B cell (primary cell): ENCODE measurements at regions of chr1 and their contacts with region 1.

Region 1: DNA sequence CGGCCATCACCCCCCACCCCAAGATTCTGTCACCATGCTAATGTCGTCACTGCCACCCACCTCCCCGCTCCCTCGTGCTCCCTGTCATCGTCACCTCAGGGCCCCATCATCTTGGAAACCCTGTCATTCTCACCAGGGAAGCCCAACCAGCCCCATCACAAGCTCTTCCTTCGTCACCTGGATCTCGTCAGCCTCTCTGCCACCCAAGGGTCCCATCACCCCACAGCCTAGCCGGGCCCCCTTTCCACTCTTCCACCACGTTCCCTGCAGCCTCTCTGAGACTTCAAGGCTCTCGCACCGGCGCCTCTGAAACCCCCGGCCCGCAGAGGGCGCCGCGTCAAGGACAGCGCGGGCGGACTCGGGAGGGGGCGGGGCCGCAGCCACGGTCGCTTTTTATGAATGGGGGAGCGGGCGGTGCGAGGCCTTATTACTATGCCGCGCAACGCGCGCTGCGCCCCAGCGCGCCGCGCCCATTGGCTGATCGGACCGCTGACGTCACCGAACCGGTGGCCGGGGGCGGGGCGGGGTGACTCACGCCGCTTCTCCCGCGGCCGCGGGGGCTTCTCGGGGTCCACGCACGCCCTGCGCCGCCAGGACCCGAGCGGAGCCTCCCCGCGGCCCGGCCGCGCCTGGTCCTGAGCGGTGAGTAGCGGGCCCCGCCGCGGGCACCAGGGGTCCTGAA is at the start of gene GPR3:
- DNase-seq: peak; percentile 96
- ATAC-seq: peak; percentile 91
- H3K4me3 ChIP-seq: peak within 1 kb of the TSS in 4 of 5 experiments; percentile 34 to 60 (median 56)
- H3K4me3 Mint-ChIP-seq: peak within 1 kb of the TSS; percentile 81
- H3K27ac ChIP-seq: peak within 1 kb of the TSS in 1 of 2 donors; percentile 50
- H3K27ac Mint-ChIP-seq: peak within 1 kb of the TSS; percentile 67
- H3K4me1 ChIP-seq: peaks cover 12 to 24% of the 10 kb centered on the region in 2 donors
- H3K4me1 Mint-ChIP-seq: peaks cover 22% of the 10 kb centered on the region
- H3K27me3 ChIP-seq: no peaks in the 10 kb centered on the region
- H3K27me3 Mint-ChIP-seq: peaks cover 3% of the 10 kb centered on the region
- CTCF ChIP-seq: peak; percentile 65
- total RNA-seq, gene GPR3: not detected in 2 replicates

Region 2: GRCh38 chr1:27097484-27097917 is 294.7 kb before region 1 on chr1:
- CTCF ChIA-PET with region 1: interaction called, 20 read pairs
- POLR2A ChIA-PET with region 1: no interaction called
- intact Hi-C with region 1: loop called (anchors 1 kb)
- DNase-seq: peak; percentile 81
- ATAC-seq: peak; percentile 48
- H3K4me3 ChIP-seq: no peak overlapping the region
- H3K4me3 Mint-ChIP-seq: no peak overlapping the region
- H3K27ac ChIP-seq: no peak overlapping the region
- H3K27ac Mint-ChIP-seq: peak overlapping the region; percentile 53
- H3K4me1 ChIP-seq: peaks cover 12 to 23% of the 10 kb centered on the region in 2 donors
- H3K4me1 Mint-ChIP-seq: peaks cover 20% of the 10 kb centered on the region
- H3K27me3 ChIP-seq: no peaks in the 10 kb centered on the region
- H3K27me3 Mint-ChIP-seq: no peaks in the 10 kb centered on the region
- CTCF ChIP-seq: peak; percentile 95

Region 3: GRCh38 chr1:27102707-27103491 is 289.3 kb before region 1 on chr1:
- CTCF ChIA-PET with region 1: interaction called, 20 read pairs
- POLR2A ChIA-PET with region 1: no interaction called
- intact Hi-C with region 1: loop called (anchors 1 kb)
- DNase-seq: peak; percentile 85
- ATAC-seq: peak; percentile 46
- H3K4me3 ChIP-seq: no peak overlapping the region
- H3K4me3 Mint-ChIP-seq: no peak overlapping the region
- H3K27ac ChIP-seq: no peak overlapping the region
- H3K27ac Mint-ChIP-seq: peak overlapping the region; percentile 77
- H3K4me1 ChIP-seq: peaks cover 24 to 41% of the 10 kb centered on the region in 2 donors
- H3K4me1 Mint-ChIP-seq: peaks cover 37% of the 10 kb centered on the region
- H3K27me3 ChIP-seq: no peaks in the 10 kb centered on the region
- H3K27me3 Mint-ChIP-seq: no peaks in the 10 kb centered on the region
- CTCF ChIP-seq: peak; percentile 92

Region 4: DNA sequence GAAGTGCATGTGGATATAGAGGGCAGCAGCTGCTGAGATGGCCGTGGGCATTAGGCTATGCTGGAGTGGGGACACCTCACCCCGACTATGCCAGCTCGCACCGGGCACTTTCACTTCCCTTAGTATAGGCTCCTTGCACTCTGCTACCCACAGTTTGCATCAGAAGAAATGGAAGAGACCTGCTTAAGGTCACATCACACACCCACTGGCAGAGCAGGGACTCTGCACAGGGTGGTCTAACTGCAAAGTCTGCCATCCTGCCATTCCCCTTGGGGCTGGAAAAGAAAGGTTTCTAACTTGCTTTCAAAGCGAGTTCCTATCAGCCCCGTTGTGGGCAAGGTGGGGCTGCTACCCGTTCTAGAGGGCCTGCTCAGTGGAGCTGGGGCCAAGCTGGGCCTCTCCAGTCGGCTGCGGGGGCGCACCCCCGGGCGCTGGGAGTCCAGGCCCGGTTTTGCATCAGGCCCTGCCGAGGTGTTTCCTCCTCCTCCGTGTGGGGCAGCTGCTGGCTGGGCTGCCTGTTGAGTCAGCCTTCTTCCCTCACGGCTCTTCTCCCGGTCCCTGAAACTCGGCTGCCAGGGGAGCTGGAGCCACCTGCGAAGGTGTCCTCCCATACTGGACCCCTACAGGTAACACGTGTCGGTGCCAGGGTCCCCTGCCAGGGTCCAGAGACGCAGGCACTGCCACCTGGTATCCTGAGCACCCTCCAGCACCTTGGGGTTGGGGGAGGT is 50.5 kb before region 1 on chr1 and contains the start of gene SYTL1:
- CTCF ChIA-PET with region 1: interaction called, 96 read pairs
- POLR2A ChIA-PET with region 1: no interaction called
- intact Hi-C with region 1: no loop called
- DNase-seq: peak; percentile 89
- ATAC-seq: peak; percentile 78
- H3K4me3 ChIP-seq: peak within 1 kb of the TSS; percentile 61 to 89 (median 79)
- H3K4me3 Mint-ChIP-seq: peak within 1 kb of the TSS; percentile 96
- H3K27ac ChIP-seq: peak within 1 kb of the TSS; percentile 85 to 88
- H3K27ac Mint-ChIP-seq: peak within 1 kb of the TSS; percentile 98
- H3K4me1 ChIP-seq: peaks cover 37 to 59% of the 10 kb centered on the region in 2 donors
- H3K4me1 Mint-ChIP-seq: peaks cover 64% of the 10 kb centered on the region
- H3K27me3 ChIP-seq: no peaks in the 10 kb centered on the region
- H3K27me3 Mint-ChIP-seq: no peaks in the 10 kb centered on the region
- CTCF ChIP-seq: no peak
- total RNA-seq, gene SYTL1: 156 and 159 TPM in 2 replicates

Region 5: GRCh38 chr1:27357281-27358037 is 34.8 kb before region 1 on chr1:
- CTCF ChIA-PET with region 1: interaction called, 135 read pairs
- POLR2A ChIA-PET with region 1: interaction called, 6 read pairs
- intact Hi-C with region 1: loop called (anchors 1 kb)
- DNase-seq: peak; percentile 90
- ATAC-seq: peak; percentile 71
- H3K4me3 ChIP-seq: peak overlapping the region; percentile 21 to 63 (median 54)
- H3K4me3 Mint-ChIP-seq: peak overlapping the region; percentile 84
- H3K27ac ChIP-seq: peak overlapping the region; percentile 19 to 34
- H3K27ac Mint-ChIP-seq: peak overlapping the region; percentile 75
- H3K4me1 ChIP-seq: peaks cover 36 to 54% of the 10 kb centered on the region in 2 donors
- H3K4me1 Mint-ChIP-seq: peaks cover 48% of the 10 kb centered on the region
- H3K27me3 ChIP-seq: no peaks in the 10 kb centered on the region
- H3K27me3 Mint-ChIP-seq: no peaks in the 10 kb centered on the region
- CTCF ChIP-seq: peak; percentile 98

Region 6: GRCh38 chr1:27365372-27366112 is 26.7 kb before region 1 on chr1:
- CTCF ChIA-PET with region 1: interaction called, 135 read pairs
- POLR2A ChIA-PET with region 1: interaction called, 3 read pairs
- intact Hi-C with region 1: loop called (anchors 2 kb)
- DNase-seq: peak; percentile 88
- ATAC-seq: peak; percentile 70
- H3K4me3 ChIP-seq: peak overlapping the region; percentile 32 to 74 (median 60)
- H3K4me3 Mint-ChIP-seq: peak overlapping the region; percentile 93
- H3K27ac ChIP-seq: no peak overlapping the region
- H3K27ac Mint-ChIP-seq: peak overlapping the region; percentile 82
- H3K4me1 ChIP-seq: peaks cover 33 to 47% of the 10 kb centered on the region in 2 donors
- H3K4me1 Mint-ChIP-seq: peaks cover 54% of the 10 kb centered on the region
- H3K27me3 ChIP-seq: no peaks in the 10 kb centered on the region
- H3K27me3 Mint-ChIP-seq: no peaks in the 10 kb centered on the region
- CTCF ChIP-seq: no peak

Region 7: GRCh38 chr1:27372022-27372807 is 20.0 kb before region 1 on chr1:
- CTCF ChIA-PET with region 1: interaction called, 49 read pairs
- POLR2A ChIA-PET with region 1: no interaction called
- intact Hi-C with region 1: loop called (anchors 2 kb)
- DNase-seq: no peak
- ATAC-seq: peak; percentile 68
- H3K4me3 ChIP-seq: no peak overlapping the region
- H3K4me3 Mint-ChIP-seq: no peak overlapping the region
- H3K27ac ChIP-seq: no peak overlapping the region
- H3K27ac Mint-ChIP-seq: peak overlapping the region; percentile 59
- H3K4me1 ChIP-seq: peaks cover 23 to 47% of the 10 kb centered on the region in 2 donors
- H3K4me1 Mint-ChIP-seq: peaks cover 43% of the 10 kb centered on the region
- H3K27me3 ChIP-seq: no peaks in the 10 kb centered on the region
- H3K27me3 Mint-ChIP-seq: no peaks in the 10 kb centered on the region
- CTCF ChIP-seq: no peak

Region 8: GRCh38 chr1:27959400-27960217 is 567.4 kb after region 1 on chr1 and contains the start of gene XKR8:
- CTCF ChIA-PET with region 1: no interaction called
- POLR2A ChIA-PET with region 1: no interaction called
- intact Hi-C with region 1: no loop called
- DNase-seq: peak; percentile 88
- ATAC-seq: peak; percentile 98
- H3K4me3 ChIP-seq: peak within 1 kb of the TSS; percentile 63 to 92 (median 85)
- H3K4me3 Mint-ChIP-seq: peak within 1 kb of the TSS; percentile 93
- H3K27ac ChIP-seq: peak within 1 kb of the TSS; percentile 51 to 82
- H3K27ac Mint-ChIP-seq: peak within 1 kb of the TSS; percentile 89
- H3K4me1 ChIP-seq: peaks cover 14 to 17% of the 10 kb centered on the region in 2 donors
- H3K4me1 Mint-ChIP-seq: peaks cover 16% of the 10 kb centered on the region
- H3K27me3 ChIP-seq: peaks cover 0 to 3% (median 0%) of the 10 kb centered on the region in 4 experiments
- H3K27me3 Mint-ChIP-seq: no peaks in the 10 kb centered on the region
- CTCF ChIP-seq: peak; percentile 48
- total RNA-seq, gene XKR8: 8.7 and 10.1 TPM in 2 replicates